Activated B cell treated with CpG ODN at 0.5 μM for 24 hours (primary cell): ENCODE measurements at regions of chr12 and their contacts with region 1.

Region 1: GRCh38 chr12:118318744-118319143 is 54.0 kb downstream of the TAOK3 start:
- DNase-seq: no peak
- ATAC-seq: no peak
- H3K4me3 Mint-ChIP-seq: no peak overlapping the region
- H3K27ac Mint-ChIP-seq: no peak overlapping the region
- H3K4me1 Mint-ChIP-seq: peaks cover 33% of the 10 kb centered on the region
- H3K27me3 Mint-ChIP-seq: no peaks in the 10 kb centered on the region
- CTCF ChIP-seq: no peak

Region 2: DNA sequence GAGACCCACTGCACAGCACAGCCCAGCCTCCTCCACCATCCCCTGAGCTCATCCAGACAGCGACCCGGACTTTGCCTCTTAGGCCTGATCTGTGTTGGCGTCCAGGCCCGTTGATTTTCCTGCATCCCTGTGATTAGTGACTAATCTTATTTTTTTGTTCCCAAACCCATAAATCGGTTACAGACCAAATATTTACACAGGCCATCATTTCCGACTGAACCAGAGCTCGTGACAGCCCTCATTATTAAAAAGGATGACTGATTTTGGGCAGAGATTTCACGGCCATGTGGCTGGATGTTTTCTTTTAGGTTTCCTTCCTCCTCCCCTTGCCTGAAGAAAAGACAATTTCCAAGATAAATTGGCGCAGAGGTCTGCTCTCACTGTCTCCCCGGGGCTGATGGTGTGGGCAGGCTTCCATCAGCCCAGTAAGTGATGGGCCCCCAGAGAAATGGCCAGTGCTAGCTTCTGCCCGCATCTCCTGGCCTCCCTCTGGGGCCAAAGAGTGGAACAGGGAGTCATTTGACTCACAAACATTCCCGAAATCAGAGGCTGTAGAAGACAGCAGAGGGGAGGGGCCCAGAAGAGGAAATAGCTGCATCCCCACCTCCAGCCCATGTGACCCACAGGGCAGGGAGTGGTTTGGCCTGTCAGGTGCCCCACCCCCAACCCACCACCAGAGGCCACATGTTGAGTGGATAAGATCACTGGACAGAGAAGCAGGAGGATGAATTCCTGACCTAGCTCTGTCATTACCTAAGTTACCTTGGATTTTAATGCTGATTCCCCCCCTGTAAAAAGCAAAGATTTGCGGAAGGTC is 633.4 kb before region 1 on chr12:
- CTCF ChIA-PET with region 1: no interaction called
- POLR2A ChIA-PET with region 1: no interaction called
- intact Hi-C with region 1: no loop called
- DNase-seq: no peak
- ATAC-seq: no peak
- H3K4me3 Mint-ChIP-seq: no peak overlapping the region
- H3K27ac Mint-ChIP-seq: no peak overlapping the region
- H3K4me1 Mint-ChIP-seq: no peaks in the 10 kb centered on the region
- H3K27me3 Mint-ChIP-seq: no peaks in the 10 kb centered on the region
- CTCF ChIP-seq: no peak

Region 3: GRCh38 chr12:118307069-118307954 is 11.4 kb before region 1 on chr12:
- CTCF ChIA-PET with region 1: no interaction called
- POLR2A ChIA-PET with region 1: interaction called, 15 read pairs
- intact Hi-C with region 1: no loop called
- DNase-seq: no peak
- ATAC-seq: peak; percentile 57
- H3K4me3 Mint-ChIP-seq: peak overlapping the region; percentile 24
- H3K27ac Mint-ChIP-seq: peak overlapping the region; percentile 3
- H3K4me1 Mint-ChIP-seq: peaks cover 42% of the 10 kb centered on the region
- H3K27me3 Mint-ChIP-seq: no peaks in the 10 kb centered on the region
- CTCF ChIP-seq: no peak